ENCODE measurements at regions of chr3 and their contacts with region 1.

Region 1: DNA sequence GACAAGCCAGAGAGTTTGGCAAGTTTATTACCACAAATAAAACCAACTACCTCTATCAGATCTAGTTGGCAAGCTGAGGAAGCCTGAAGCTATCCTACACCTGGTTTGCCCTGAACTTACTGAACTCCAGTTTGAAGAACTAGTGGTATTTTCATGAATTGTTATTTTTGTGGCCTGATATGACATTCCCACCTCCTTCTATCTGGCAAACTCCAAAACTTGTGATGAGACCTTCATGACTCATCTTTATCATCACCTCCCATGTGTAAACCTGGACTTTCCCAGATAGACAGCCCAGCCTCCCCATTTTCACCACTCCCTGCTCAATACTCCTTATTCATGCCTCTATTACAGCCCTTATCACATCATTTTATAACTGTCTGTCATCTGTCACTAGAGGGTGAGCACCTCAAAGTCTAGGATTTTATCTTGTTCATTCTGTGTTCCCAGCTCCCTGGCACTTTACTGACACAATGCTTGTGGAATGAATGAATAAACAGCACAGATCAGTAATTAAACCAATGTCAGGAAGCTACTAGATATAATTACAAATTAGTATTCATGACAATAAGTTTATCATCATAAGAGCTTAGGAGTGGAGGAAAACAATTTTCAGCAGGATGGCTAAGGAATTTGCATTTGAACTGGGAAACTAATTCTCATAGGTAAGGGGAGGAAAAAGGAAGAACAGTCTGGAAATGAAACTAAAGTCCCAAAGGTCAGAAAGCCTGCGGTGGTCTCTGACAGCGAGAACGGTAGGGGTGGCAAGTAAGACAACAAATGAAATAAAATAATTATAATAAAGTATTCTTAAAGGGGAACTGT is 13.2 kb upstream of the TRANK1 start:
- DNase-seq: peak; percentile 82
- H3K4me3 Mint-ChIP-seq: peak overlapping the region; percentile 38
- H3K27ac Mint-ChIP-seq: peak overlapping the region; percentile 90
- H3K4me1 Mint-ChIP-seq: peaks cover 11% of the 10 kb centered on the region
- H3K27me3 Mint-ChIP-seq: no peaks in the 10 kb centered on the region
- CTCF ChIP-seq: no peak

Region 2: DNA sequence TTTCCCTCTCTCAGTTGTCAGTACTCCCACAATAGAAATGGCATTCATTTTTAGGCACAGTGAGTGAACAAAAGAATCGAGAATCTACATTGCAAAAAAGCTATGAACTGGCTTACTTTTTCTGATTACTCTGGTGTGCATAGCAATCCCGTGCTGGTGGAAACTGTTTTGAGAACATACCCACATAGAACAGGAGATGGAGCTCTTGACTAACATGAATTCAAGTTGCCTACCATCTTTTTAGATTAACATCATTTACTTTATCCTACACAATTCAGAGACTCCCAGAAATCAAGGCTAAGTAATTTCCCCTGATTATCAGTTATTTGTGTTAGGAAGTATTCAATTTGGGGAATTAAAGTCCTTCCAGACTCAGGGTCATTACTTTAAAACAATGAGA is 992.2 kb before region 1 on chr3:
- CTCF ChIA-PET with region 1: no interaction called
- POLR2A ChIA-PET with region 1: no interaction called
- intact Hi-C with region 1: loop called (anchors 10 kb)
- DNase-seq: peak; percentile 42
- H3K4me3 Mint-ChIP-seq: no peak overlapping the region
- H3K27ac Mint-ChIP-seq: no peak overlapping the region
- H3K4me1 Mint-ChIP-seq: no peaks in the 10 kb centered on the region
- H3K27me3 Mint-ChIP-seq: peaks cover 45% of the 10 kb centered on the region
- CTCF ChIP-seq: peak; percentile 50

Region 3: GRCh38 chr3:36792342-36792741 is 165.7 kb before region 1 on chr3:
- CTCF ChIA-PET with region 1: interaction called, 9 read pairs
- POLR2A ChIA-PET with region 1: no interaction called
- intact Hi-C with region 1: loop called (anchors 1 kb)
- DNase-seq: peak; percentile 51
- H3K4me3 Mint-ChIP-seq: no peak overlapping the region
- H3K27ac Mint-ChIP-seq: no peak overlapping the region
- H3K4me1 Mint-ChIP-seq: no peaks in the 10 kb centered on the region
- H3K27me3 Mint-ChIP-seq: peaks cover 26% of the 10 kb centered on the region
- CTCF ChIP-seq: peak; percentile 53

Region 4: GRCh38 chr3:36852071-36852470 is 106.0 kb before region 1 on chr3:
- CTCF ChIA-PET with region 1: interaction called, 14 read pairs
- POLR2A ChIA-PET with region 1: no interaction called
- intact Hi-C with region 1: no loop called
- DNase-seq: no peak
- H3K4me3 Mint-ChIP-seq: no peak overlapping the region
- H3K27ac Mint-ChIP-seq: no peak overlapping the region
- H3K4me1 Mint-ChIP-seq: no peaks in the 10 kb centered on the region
- H3K27me3 Mint-ChIP-seq: no peaks in the 10 kb centered on the region
- CTCF ChIP-seq: no peak

Region 5: GRCh38 chr3:36904641-36905040 is 53.4 kb before region 1 on chr3:
- CTCF ChIA-PET with region 1: interaction called, 126 read pairs
- POLR2A ChIA-PET with region 1: interaction called, 43 read pairs
- intact Hi-C with region 1: loop called (anchors 1 kb)
- DNase-seq: peak; percentile 24
- H3K4me3 Mint-ChIP-seq: no peak overlapping the region
- H3K27ac Mint-ChIP-seq: no peak overlapping the region
- H3K4me1 Mint-ChIP-seq: peaks cover 21% of the 10 kb centered on the region
- H3K27me3 Mint-ChIP-seq: no peaks in the 10 kb centered on the region
- CTCF ChIP-seq: peak; percentile 55

Region 6: GRCh38 chr3:36937492-36937891 is 20.6 kb before region 1 on chr3:
- CTCF ChIA-PET with region 1: interaction called, 19 read pairs
- POLR2A ChIA-PET with region 1: interaction called, 6 read pairs
- intact Hi-C with region 1: no loop called
- DNase-seq: no peak
- H3K4me3 Mint-ChIP-seq: no peak overlapping the region
- H3K27ac Mint-ChIP-seq: no peak overlapping the region
- H3K4me1 Mint-ChIP-seq: peaks cover 7% of the 10 kb centered on the region
- H3K27me3 Mint-ChIP-seq: no peaks in the 10 kb centered on the region
- CTCF ChIP-seq: no peak

Region 7: GRCh38 chr3:36988356-36988755 is 30.3 kb after region 1 on chr3:
- CTCF ChIA-PET with region 1: interaction called, 11 read pairs
- POLR2A ChIA-PET with region 1: interaction called, 32 read pairs
- intact Hi-C with region 1: no loop called
- DNase-seq: no peak
- H3K4me3 Mint-ChIP-seq: peak overlapping the region; percentile 3
- H3K27ac Mint-ChIP-seq: peak overlapping the region; percentile 46
- H3K4me1 Mint-ChIP-seq: peaks cover 9% of the 10 kb centered on the region
- H3K27me3 Mint-ChIP-seq: no peaks in the 10 kb centered on the region
- CTCF ChIP-seq: no peak

Measured in MCF 10A (cell line).